ENCODE measurements at regions of chr7 and their contacts with region 1.

Region 1: DNA sequence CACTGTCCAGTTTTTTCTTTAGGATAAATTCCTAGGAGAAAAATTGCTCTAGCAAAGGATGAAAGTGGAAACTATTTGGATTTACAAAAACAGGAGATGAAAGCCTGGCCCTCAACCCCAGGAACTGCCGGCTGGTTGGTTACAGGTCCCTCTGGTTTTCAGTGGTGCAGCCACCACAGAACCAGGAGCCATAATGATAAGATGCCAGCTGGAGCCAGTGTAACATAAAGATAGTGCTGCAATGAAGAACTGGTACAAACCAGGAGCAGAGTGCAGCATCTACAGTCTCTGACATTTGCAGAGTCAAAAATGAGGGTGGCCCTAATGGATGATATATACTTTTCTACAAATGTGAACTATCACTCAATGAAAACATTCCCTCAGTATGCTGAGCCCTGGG is 20.4 kb upstream of the NUP42 start:
- DNase-seq: no peak
- ATAC-seq: no peak
- H3K4me3 Mint-ChIP-seq: no peak overlapping the region
- H3K27ac Mint-ChIP-seq: no peak overlapping the region
- H3K4me1 Mint-ChIP-seq: no peaks in the 10 kb centered on the region
- H3K27me3 Mint-ChIP-seq: no peaks in the 10 kb centered on the region
- CTCF ChIP-seq: no peak

Region 2: DNA sequence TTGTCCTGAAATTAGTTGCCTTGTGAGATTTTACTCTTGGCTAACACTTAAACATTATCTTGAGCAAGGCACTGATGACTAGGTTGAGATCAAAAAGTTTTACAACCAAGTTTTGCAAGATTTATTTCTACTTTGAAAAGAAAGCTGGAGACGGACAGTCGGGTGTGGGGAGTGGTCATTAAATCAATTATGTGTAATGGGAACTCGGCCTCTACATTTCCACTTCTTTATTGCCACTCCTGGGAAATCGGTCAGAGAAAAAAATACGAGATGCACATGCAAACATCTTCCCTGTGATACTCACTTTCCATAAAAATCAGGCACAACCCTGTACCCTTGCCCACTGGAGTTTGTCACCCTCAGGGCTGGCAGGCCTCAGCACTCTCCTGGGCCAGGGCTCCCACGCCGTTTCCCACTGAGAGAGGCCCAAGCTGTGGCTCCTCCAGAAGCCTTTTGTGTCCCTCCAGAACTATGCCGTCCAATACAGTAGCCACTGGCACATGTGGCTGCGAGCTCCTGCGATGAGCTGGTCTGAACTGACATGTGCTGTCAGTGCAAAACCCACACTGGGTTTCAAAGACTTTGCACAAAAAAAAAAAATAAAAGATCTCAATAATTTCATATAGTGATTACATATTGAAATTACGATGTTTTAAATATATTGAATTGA is 77.6 kb after region 1 on chr7:
- CTCF ChIA-PET with region 1: no interaction called
- POLR2A ChIA-PET with region 1: interaction called, 10 read pairs
- DNase-seq: no peak
- ATAC-seq: no peak
- H3K4me3 Mint-ChIP-seq: no peak overlapping the region
- H3K27ac Mint-ChIP-seq: no peak overlapping the region
- H3K4me1 Mint-ChIP-seq: peaks cover 4% of the 10 kb centered on the region; the same call in 1 of the 2 replicates
- H3K27me3 Mint-ChIP-seq: no peaks in the 10 kb centered on the region
- CTCF ChIP-seq: no peak